Left cardiac atrium (tissue), 4 donors: ENCODE measurements at regions of chrX and their contacts with region 1.

Region 1: GRCh38 chrX:53678667-53679066 is 7.9 kb downstream of the HUWE1 start:
- DNase-seq: no peak
- ATAC-seq: no peak

Region 2: DNA sequence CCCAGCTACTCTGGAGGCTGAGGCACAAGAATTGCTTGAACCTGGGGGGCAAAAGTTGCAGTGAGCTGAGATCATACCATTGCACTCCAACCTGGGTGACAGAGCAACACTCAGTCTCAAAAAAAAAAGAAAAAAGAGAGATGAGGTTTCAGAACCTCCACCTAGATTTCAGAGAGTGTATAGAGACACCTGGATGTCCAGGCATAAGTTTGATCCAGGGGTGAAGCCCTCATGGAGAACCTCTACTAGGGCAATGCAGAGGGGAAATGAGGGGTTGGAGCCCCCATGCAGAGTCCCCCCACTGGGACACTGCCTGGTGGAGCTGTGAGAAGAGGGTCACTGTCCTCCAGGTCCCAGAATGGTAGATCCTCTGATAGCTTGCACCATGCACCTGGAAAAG is 151.7 kb before region 1 on chrX:
- intact Hi-C with region 1: no loop called
- DNase-seq: no peak
- ATAC-seq: no peak

Region 3: DNA sequence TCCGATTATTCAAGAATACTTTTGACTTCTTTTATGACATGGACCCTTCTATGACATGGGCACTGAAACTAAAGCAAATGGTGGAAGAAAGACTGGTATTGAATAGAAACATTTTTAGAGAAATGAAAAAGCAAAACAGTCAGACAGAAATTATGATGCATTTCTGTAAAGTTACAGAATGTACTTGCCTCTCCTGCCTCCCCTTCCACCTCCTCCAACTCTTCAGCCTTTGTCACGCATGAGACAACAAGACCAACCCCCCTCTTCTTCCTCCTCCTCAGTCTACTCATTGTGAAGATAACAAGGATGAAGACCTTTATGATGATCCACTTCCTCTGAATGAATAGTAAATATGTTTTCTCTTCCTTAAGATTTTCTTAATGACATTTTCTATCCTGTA is 54.1 kb after region 1 on chrX:
- intact Hi-C with region 1: loop called in 1 of 2 experiments (anchors 10 kb)
- DNase-seq: no peak
- ATAC-seq: no peak